Naive thymus-derived CD4-positive, alpha-beta T cell (primary cell): ENCODE measurements at regions of chr6 and their contacts with region 1.

Region 1: GRCh38 chr6:98834060-98835031 is at the start of gene POU3F2:
- DNase-seq: peak in 6 of 9 donors; percentile 40 to 58 (median 52)
- ATAC-seq: peak; percentile 82
- H3K4me3 ChIP-seq: peak within 1 kb of the TSS; percentile 66
- H3K4me3 Mint-ChIP-seq: peak within 1 kb of the TSS; percentile 87 to 98 (median 92)
- H3K27ac ChIP-seq: no peak within 1 kb of the TSS
- H3K27ac Mint-ChIP-seq: peak within 1 kb of the TSS in 4 of 9 donors; percentile 21 to 86 (median 78)
- H3K4me1 ChIP-seq: peaks cover 17 to 26% of the 10 kb centered on the region in 2 donors
- H3K4me1 Mint-ChIP-seq: peaks cover 31 to 57% (median 41%) of the 10 kb centered on the region in 7 donors
- H3K27me3 ChIP-seq: peaks cover 39 to 63% of the 10 kb centered on the region in 2 donors
- H3K27me3 Mint-ChIP-seq: peaks cover 73 to 87% (median 85%) of the 10 kb centered on the region in 5 donors
- total RNA-seq, gene POU3F2: not detected

Region 2: DNA sequence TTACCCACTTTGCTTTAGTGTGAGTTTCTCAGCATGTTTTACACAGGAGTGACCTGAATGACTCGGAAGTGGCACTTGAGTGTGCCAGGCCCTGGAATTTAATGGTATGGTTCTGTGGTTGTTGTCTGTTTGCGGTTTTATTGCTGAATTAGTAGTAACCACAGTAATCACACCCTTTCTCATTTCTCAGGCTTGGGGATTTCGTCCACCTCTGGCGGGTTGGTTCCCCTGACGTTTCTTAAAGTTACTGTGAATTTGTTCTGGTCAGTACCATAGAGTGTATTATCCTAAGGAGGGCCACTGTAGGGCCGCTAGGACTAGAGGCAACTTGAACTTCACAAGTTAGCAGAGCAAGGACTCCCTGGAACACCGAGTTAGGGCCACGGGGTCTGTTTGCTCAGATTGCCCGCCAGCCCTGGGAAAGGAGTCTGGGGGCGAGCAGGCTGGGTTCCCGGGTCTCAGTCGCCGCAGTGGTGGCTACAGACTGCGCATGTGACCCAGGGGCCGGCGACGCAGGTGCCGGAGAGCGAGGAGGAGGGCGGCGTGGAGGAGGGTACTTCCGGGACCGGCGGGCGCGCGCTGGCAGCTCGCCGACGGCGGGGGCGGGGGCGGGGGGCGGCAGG is 1910.4 kb before region 1 on chr6:
- CTCF ChIA-PET with region 1: no interaction called
- POLR2A ChIA-PET with region 1: no interaction called
- intact Hi-C with region 1: loop called in 1 of 2 experiments (anchors 10 kb)
- DNase-seq: peak in 1 of 9 donors; percentile 5
- ATAC-seq: peak; percentile 3
- H3K4me3 ChIP-seq: peak overlapping the region; percentile 68
- H3K4me3 Mint-ChIP-seq: peak overlapping the region; percentile 91 to 99 (median 98)
- H3K27ac ChIP-seq: peak overlapping the region; percentile 87
- H3K27ac Mint-ChIP-seq: peak overlapping the region; percentile 91 to 100 (median 99)
- H3K4me1 ChIP-seq: peaks cover 13 to 16% of the 10 kb centered on the region in 2 donors
- H3K4me1 Mint-ChIP-seq: peaks cover 8 to 50% (median 33%) of the 10 kb centered on the region in 7 donors
- H3K27me3 ChIP-seq: no peaks in the 10 kb centered on the region
- H3K27me3 Mint-ChIP-seq: peaks cover 0 to 22% (median 4%) of the 10 kb centered on the region in 5 donors

Region 3: GRCh38 chr6:97282726-97283617 is 1551.4 kb before region 1 on chr6 and contains the start of gene MMS22L:
- CTCF ChIA-PET with region 1: no interaction called
- POLR2A ChIA-PET with region 1: no interaction called
- intact Hi-C with region 1: loop called in 1 of 2 experiments (anchors 5 kb)
- DNase-seq: peak; percentile 83 to 93 (median 90)
- ATAC-seq: peak; percentile 99
- H3K4me3 ChIP-seq: peak within 1 kb of the TSS; percentile 90
- H3K4me3 Mint-ChIP-seq: peak within 1 kb of the TSS; percentile 90 to 98 (median 96)
- H3K27ac ChIP-seq: peak within 1 kb of the TSS; percentile 70
- H3K27ac Mint-ChIP-seq: peak within 1 kb of the TSS; percentile 83 to 96 (median 89)
- H3K4me1 ChIP-seq: peaks cover 0 to 16% of the 10 kb centered on the region in 2 donors
- H3K4me1 Mint-ChIP-seq: peaks cover 5 to 37% (median 24%) of the 10 kb centered on the region in 7 donors
- H3K27me3 ChIP-seq: no peaks in the 10 kb centered on the region
- H3K27me3 Mint-ChIP-seq: peaks cover 0 to 8% (median 0%) of the 10 kb centered on the region in 5 donors
- total RNA-seq, gene MMS22L: 11.8 to 48.1 (median 12.9) TPM

Region 4: GRCh38 chr6:98845211-98846020 is 11.1 kb after region 1 on chr6:
- CTCF ChIA-PET with region 1: no interaction called
- POLR2A ChIA-PET with region 1: no interaction called
- intact Hi-C with region 1: loop called (anchors 1 kb)
- DNase-seq: peak in 6 of 9 donors; percentile 52 to 68 (median 64)
- ATAC-seq: peak; percentile 80
- H3K4me3 ChIP-seq: no peak overlapping the region
- H3K4me3 Mint-ChIP-seq: peak overlapping the region; percentile 59 to 77 (median 74)
- H3K27ac ChIP-seq: no peak overlapping the region
- H3K27ac Mint-ChIP-seq: peak overlapping the region in 1 of 9 donors; percentile 71
- H3K4me1 ChIP-seq: peaks cover 3 to 28% of the 10 kb centered on the region in 2 donors
- H3K4me1 Mint-ChIP-seq: peaks cover 12 to 43% (median 25%) of the 10 kb centered on the region in 7 donors
- H3K27me3 ChIP-seq: peaks cover 18 to 55% of the 10 kb centered on the region in 2 donors
- H3K27me3 Mint-ChIP-seq: peaks cover 79 to 89% (median 86%) of the 10 kb centered on the region in 5 donors

Region 5: DNA sequence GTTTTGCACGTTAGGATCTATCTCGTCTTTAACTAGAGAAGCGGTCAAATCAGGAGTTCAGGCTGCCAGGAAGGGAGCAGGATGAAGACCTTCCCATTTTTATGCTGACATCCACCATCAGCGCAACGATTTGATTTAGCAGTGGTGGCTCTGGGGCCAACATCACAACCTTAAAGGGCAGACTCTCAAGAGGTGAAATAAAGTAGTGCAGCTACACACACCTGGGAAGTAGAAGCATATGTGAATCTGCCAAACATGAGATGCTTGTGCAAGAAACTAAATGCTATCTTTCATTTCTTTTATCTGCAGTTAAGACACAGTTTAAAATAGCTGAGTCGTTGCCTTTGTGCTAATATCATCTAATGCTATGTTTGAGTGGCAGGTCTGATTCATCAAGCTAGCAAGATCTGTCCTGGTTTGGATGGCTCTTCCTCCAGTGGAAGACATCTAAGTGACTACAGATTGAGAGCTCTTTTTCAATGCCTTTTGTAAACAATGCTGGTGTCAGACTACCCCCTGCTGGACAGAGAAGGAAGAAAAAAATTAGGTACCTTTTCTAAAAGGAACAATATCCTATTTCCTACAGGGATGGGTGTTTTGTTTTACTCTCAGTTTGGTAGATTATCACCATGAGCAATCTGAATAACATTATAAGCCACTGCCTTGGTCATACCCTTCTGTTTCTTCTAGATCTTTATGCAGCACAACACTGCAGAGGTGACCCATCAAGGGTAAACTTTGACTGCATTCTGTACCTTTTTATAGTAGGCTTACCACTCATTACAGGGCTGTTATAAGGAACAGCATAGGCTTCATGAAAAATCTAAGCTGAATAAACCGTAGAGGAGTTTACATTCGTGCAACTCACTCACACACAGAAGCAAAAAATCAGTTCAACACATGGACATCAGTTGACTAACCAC is 285.0 kb after region 1 on chr6:
- CTCF ChIA-PET with region 1: no interaction called
- POLR2A ChIA-PET with region 1: no interaction called
- intact Hi-C with region 1: loop called in 1 of 2 experiments (anchors 1 kb)
- DNase-seq: peak in 5 of 9 donors; percentile 21 to 39 (median 30)
- ATAC-seq: no peak
- H3K4me3 ChIP-seq: no peak overlapping the region
- H3K4me3 Mint-ChIP-seq: no peak overlapping the region
- H3K27ac ChIP-seq: no peak overlapping the region
- H3K27ac Mint-ChIP-seq: no peak overlapping the region
- H3K4me1 ChIP-seq: no peaks in the 10 kb centered on the region
- H3K4me1 Mint-ChIP-seq: no peaks in the 10 kb centered on the region
- H3K27me3 ChIP-seq: peaks cover 0 to 4% of the 10 kb centered on the region in 2 donors
- H3K27me3 Mint-ChIP-seq: peaks cover 18 to 47% (median 25%) of the 10 kb centered on the region in 5 donors

Region 6: DNA sequence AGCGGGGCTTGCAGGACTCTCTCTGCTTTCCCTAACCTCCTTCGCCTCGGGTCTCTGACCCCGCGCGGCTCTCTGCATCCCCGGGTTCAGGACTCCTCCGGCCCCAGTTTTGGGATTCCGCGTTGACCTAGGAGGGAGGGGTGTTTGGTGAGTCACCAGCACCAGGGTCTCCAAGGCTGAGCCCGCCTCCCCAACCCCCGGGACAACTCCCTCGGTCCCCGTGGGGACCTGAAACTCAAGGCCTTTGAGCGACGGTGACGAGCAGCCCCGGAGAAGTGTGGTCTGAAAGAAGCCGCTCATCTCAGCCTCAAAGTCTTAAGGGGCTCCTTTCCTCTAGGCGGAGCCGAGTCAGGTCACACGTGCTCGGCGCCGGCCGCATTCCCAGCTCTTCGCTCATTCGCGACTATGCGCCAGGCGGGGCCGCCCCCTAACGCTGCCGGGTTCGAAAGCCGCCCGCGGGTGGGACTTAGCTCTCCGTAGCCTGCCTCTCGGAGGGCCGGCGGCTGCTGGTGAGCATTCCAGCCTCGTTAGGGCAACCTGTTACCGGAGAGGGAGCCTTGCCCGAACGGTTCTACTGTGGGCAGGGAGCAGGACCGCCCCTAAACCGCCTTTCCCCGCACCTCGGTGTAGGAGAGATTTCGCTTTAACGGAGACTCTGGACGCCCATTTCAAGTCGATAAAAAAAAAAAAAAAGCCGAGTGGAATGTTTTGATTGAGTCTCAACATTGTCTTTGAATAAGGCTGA is 769.2 kb after region 1 on chr6:
- CTCF ChIA-PET with region 1: no interaction called
- POLR2A ChIA-PET with region 1: no interaction called
- intact Hi-C with region 1: loop called in 1 of 2 experiments (anchors 2 kb)
- DNase-seq: peak in 1 of 9 donors; percentile 48
- ATAC-seq: peak; percentile 35
- H3K4me3 ChIP-seq: peak overlapping the region; percentile 40
- H3K4me3 Mint-ChIP-seq: peak overlapping the region; percentile 35 to 75 (median 70)
- H3K27ac ChIP-seq: no peak overlapping the region
- H3K27ac Mint-ChIP-seq: no peak overlapping the region
- H3K4me1 ChIP-seq: peaks cover 18 to 28% of the 10 kb centered on the region in 2 donors
- H3K4me1 Mint-ChIP-seq: peaks cover 18 to 44% (median 27%) of the 10 kb centered on the region in 7 donors
- H3K27me3 ChIP-seq: peaks cover 45 to 47% of the 10 kb centered on the region in 2 donors
- H3K27me3 Mint-ChIP-seq: peaks cover 83 to 94% (median 85%) of the 10 kb centered on the region in 5 donors

Region 7: GRCh38 chr6:100464903-100465700 is 1630.8 kb after region 1 on chr6 and contains the start of gene SIM1:
- CTCF ChIA-PET with region 1: no interaction called
- POLR2A ChIA-PET with region 1: no interaction called
- intact Hi-C with region 1: loop called in 1 of 2 experiments (anchors 5 kb)
- DNase-seq: no peak
- ATAC-seq: peak; percentile 32
- H3K4me3 ChIP-seq: no peak within 1 kb of the TSS
- H3K4me3 Mint-ChIP-seq: peak within 1 kb of the TSS; percentile 13 to 66 (median 54)
- H3K27ac ChIP-seq: no peak within 1 kb of the TSS
- H3K27ac Mint-ChIP-seq: peak within 1 kb of the TSS in 1 of 9 donors; percentile 78
- H3K4me1 ChIP-seq: peaks cover 6 to 15% of the 10 kb centered on the region in 2 donors
- H3K4me1 Mint-ChIP-seq: peaks cover 7 to 47% (median 24%) of the 10 kb centered on the region in 7 donors
- H3K27me3 ChIP-seq: peaks cover 32 to 67% of the 10 kb centered on the region in 2 donors
- H3K27me3 Mint-ChIP-seq: peaks cover 84 to 93% (median 87%) of the 10 kb centered on the region in 5 donors
- total RNA-seq, gene SIM1: not detected